ENCODE measurements at regions of chr17 and their contacts with region 1.

Region 1: GRCh38 chr17:17108451-17109049 is 66.3 kb downstream of the MPRIP start:
- DNase-seq: peak in 3 of 4 donors; percentile 65 to 93 (median 89)
- ATAC-seq: peak; percentile 66
- H3K4me3 ChIP-seq: no peak overlapping the region
- H3K27ac ChIP-seq: peak overlapping the region; percentile 46 to 60
- H3K4me1 ChIP-seq: peaks cover 46 to 60% of the 10 kb centered on the region in 2 donors
- H3K27me3 ChIP-seq: no peaks in the 10 kb centered on the region
- CTCF ChIP-seq: no peak

Region 2: DNA sequence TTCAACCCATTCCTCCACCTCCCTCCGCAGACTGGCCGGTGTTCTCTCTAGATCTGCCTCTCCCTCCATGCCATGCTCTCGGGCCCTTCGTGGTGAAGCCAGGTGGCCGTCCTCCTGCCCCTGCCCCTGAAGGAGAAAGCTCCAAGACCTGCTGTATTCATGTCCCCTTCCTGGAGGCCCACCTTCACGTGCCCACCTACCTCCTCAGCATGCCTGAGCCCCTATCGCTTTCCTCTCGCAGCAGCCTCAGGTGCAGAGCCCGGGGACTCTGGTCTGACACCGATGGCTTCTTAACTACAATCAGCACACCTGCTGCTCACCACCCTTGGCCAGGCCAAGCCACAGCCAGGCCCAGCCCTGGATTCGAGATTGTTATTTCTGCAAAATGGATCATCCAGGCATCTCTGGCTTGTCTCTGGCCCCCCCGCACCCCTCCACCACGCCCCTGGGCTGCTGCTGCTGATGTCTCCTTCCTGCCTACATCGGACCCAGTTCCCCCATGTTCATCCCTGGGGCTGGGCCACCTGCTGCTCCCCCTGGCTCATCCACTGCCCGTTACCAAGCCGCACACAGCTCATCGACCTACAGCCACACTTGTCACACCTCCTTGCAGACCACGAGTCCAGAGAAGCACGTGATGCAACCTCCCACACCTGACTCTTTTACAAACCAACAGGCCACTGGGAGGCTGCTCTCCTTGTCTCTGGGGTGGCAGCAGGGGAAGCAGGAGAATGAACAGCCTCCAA is 104.1 kb before region 1 on chr17:
- intact Hi-C with region 1: no loop called
- DNase-seq: peak in 1 of 4 donors; percentile 42
- ATAC-seq: no peak
- H3K4me3 ChIP-seq: no peak overlapping the region
- H3K27ac ChIP-seq: no peak overlapping the region
- H3K4me1 ChIP-seq: peaks cover 1 to 14% of the 10 kb centered on the region in 2 donors
- H3K27me3 ChIP-seq: no peaks in the 10 kb centered on the region
- CTCF ChIP-seq: no peak

Region 3: DNA sequence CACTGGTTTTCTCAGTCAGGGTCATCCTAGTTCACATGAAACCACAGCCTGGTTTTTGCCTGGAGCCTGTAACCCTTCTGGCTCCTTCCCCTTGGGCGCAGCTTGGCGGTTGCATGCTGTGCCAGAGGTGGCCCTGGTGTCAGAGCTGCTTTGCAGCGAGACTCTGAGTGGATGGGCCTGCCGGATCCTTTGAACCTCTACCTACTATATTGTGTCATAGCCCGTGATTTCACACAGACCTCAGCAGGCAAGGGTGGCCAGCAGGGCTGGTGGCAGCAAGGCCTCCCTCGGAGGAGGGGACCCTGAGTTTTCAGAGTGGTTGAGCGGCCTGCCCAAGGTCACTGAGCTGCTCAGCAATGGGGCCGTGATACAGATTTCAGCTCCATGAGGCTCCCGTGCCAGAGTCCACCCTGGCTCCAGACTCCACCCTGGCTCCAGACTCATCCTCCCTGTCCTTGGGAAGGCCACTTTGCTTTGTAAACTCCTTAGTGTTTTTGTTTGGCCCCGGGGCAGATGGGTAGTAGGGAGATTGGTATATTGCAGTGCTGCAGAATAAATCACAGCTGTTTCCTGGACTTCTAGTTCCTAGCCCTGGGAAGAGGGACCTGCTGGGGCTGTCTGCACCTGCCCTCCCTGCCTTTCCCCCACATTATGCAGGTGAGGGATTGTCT is 56.6 kb before region 1 on chr17:
- intact Hi-C with region 1: loop called in 1 of 2 experiments (anchors 10 kb)
- DNase-seq: no peak
- ATAC-seq: peak; percentile 29
- H3K4me3 ChIP-seq: no peak overlapping the region
- H3K27ac ChIP-seq: peak overlapping the region; percentile 21 to 39
- H3K4me1 ChIP-seq: peaks cover 38 to 71% of the 10 kb centered on the region in 2 donors
- H3K27me3 ChIP-seq: no peaks in the 10 kb centered on the region
- CTCF ChIP-seq: no peak

Region 4: GRCh38 chr17:17191346-17191792 is 82.8 kb after region 1 on chr17:
- intact Hi-C with region 1: no loop called
- DNase-seq: peak in 1 of 4 donors; percentile 55
- ATAC-seq: no peak
- H3K4me3 ChIP-seq: no peak overlapping the region
- H3K27ac ChIP-seq: peak overlapping the region; percentile 6 to 56
- H3K4me1 ChIP-seq: peaks cover 15 to 27% of the 10 kb centered on the region in 2 donors
- H3K27me3 ChIP-seq: no peaks in the 10 kb centered on the region
- CTCF ChIP-seq: no peak

Region 5: GRCh38 chr17:17387830-17388441 is 279.4 kb after region 1 on chr17:
- intact Hi-C with region 1: no loop called
- DNase-seq: no peak
- ATAC-seq: peak; percentile 85
- H3K4me3 ChIP-seq: no peak overlapping the region
- H3K27ac ChIP-seq: no peak overlapping the region
- H3K4me1 ChIP-seq: no peaks in the 10 kb centered on the region
- H3K27me3 ChIP-seq: peaks cover 0 to 5% of the 10 kb centered on the region in 2 donors
- CTCF ChIP-seq: peak in 1 of 2 donors; percentile 52

Measured in left lung (tissue), 14 donors.